Heart left ventricle (tissue), 16 donors: ENCODE measurements at regions of chr5 and their contacts with region 1.

Region 1: GRCh38 chr5:173245319-173246134 is 10.5 kb upstream of the NKX2-5 start:
- DNase-seq: peak in 2 of 5 donors; percentile 37 to 56
- ATAC-seq: peak; percentile 13 to 50 (median 48)
- H3K4me3 ChIP-seq: peak overlapping the region in 9 of 12 donors; percentile 38 to 60 (median 49)
- H3K27ac ChIP-seq: peak overlapping the region; percentile 76 to 98 (median 90)
- H3K4me1 ChIP-seq: peaks cover 0 to 38% (median 7%) of the 10 kb centered on the region in 12 donors
- H3K27me3 ChIP-seq: peaks cover 7 to 99% (median 38%) of the 10 kb centered on the region in 9 donors
- CTCF ChIP-seq: no peak
- POLR2A ChIP-seq: no peak

Region 2: DNA sequence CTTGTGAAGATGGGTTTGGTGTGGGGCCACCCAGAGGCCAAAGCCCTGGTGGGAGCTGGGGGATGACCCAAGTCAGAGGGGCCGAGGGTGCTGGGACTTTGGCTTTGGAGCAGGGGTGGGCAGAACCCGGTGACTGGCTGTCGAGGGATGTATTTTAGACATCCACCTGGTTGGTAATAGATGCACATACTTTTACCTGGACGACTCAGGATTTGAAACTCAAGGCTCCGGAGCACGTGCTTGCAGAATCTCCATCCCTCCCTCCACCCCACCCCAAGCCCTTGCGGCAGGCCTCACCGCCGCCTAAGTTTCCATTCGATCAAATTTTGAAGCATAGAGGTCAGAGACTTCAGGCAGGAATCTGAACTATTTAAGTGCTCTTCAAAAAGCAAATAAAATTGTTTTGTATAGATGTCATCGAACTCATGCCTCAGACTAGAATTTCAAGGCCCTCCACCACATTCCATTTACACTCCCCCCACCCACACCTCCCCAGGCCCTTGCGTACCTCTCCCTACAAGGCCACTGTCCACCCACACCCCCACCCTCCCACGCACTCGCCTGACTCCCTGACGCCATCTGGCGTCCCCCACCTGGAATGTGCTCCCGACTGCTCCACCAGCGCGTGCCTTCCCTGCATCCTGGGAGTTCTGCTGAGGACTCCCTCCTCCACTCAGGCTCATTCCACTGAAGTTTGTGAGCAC is 342.9 kb before region 1 on chr5:
- intact Hi-C with region 1: no loop called
- DNase-seq: peak; percentile 81 to 87 (median 85)
- ATAC-seq: peak; percentile 48 to 72 (median 59)
- H3K4me3 ChIP-seq: no peak overlapping the region
- H3K27ac ChIP-seq: peak overlapping the region; percentile 28 to 96 (median 90)
- H3K4me1 ChIP-seq: peaks cover 2 to 82% (median 64%) of the 10 kb centered on the region in 12 donors
- H3K27me3 ChIP-seq: no peaks in the 10 kb centered on the region
- CTCF ChIP-seq: peak; percentile 18 to 71 (median 58)
- POLR2A ChIP-seq: no peak

Region 3: GRCh38 chr5:173268750-173269432 is 23.4 kb after region 1 on chr5:
- intact Hi-C with region 1: loop called in 1 of 10 experiments (anchors 2 kb)
- DNase-seq: peak; percentile 73 to 92 (median 74)
- ATAC-seq: peak; percentile 76 to 94 (median 92)
- H3K4me3 ChIP-seq: no peak overlapping the region
- H3K27ac ChIP-seq: peak overlapping the region; percentile 10 to 90 (median 74)
- H3K4me1 ChIP-seq: peaks cover 0 to 36% (median 9%) of the 10 kb centered on the region in 12 donors
- H3K27me3 ChIP-seq: peaks cover 0 to 20% (median 0%) of the 10 kb centered on the region in 9 donors
- CTCF ChIP-seq: no peak
- POLR2A ChIP-seq: peak in 1 of 2 donors; percentile 15

Region 4: GRCh38 chr5:173396311-173396993 is 150.9 kb after region 1 on chr5:
- intact Hi-C with region 1: no loop called
- DNase-seq: no peak
- ATAC-seq: peak in 2 of 4 donors; percentile 25 to 49
- H3K4me3 ChIP-seq: no peak overlapping the region
- H3K27ac ChIP-seq: peak overlapping the region in 2 of 12 donors; percentile 33 to 57
- H3K4me1 ChIP-seq: peaks cover 0 to 9% (median 0%) of the 10 kb centered on the region in 12 donors
- H3K27me3 ChIP-seq: no peaks in the 10 kb centered on the region
- CTCF ChIP-seq: peak in 2 of 12 donors; percentile 5 to 16
- POLR2A ChIP-seq: no peak